Stomach (tissue), 19 donors: ENCODE measurements at regions of chr17 and their contacts with region 1.

Region 1: DNA sequence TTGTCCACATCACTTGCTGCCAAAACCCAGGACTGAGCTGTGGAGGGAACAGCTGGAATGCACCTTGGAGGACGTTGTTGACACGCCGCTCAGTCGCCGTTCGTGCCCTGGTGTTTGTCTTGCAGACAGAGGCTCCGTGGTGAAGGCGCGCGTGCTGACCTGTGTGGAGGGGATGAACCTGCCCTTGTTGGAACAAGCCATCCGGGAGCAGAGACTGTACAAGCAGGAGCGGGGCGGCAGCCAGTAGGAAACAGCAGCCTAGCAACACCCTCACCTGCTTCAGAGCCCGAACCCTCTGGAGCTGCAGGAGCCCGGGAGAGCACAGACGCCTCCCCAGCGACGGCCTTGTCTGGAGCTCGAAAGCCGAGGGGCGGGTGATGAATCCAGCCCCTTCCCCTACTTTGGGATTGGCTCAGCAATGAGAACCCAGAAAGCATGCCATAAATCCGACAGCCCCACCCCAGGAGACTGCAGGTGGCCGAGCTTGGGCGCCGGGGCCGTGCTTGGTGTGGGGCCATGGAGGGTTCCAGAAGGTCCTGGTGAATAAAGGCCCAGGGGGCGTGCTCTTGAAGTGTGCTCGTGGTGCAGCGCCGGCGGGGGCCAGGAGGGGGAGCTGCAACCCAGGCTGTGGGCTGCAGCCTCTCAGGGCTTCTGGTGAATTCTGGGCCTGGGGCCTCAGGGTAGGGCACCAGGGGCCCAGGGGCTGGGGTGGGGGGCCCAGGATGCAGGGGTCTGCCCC is 470 bp upstream of the CDK3 start:
- DNase-seq: peak; percentile 58 to 81
- H3K4me3 ChIP-seq: no peak overlapping the region
- H3K27ac ChIP-seq: peak overlapping the region in 2 of 5 donors; percentile 18 to 36
- H3K4me1 ChIP-seq: peaks cover 27 to 61% (median 45%) of the 10 kb centered on the region in 4 donors
- H3K27me3 ChIP-seq: no peaks in the 10 kb centered on the region
- CTCF ChIP-seq: peak in 4 of 7 experiments; percentile 49 to 73 (median 63)
- EP300 ChIP-seq: no peak
- POLR2A ChIP-seq: no peak

Region 2: GRCh38 chr17:75904749-75905521 is 95.2 kb before region 1 on chr17 and contains the start of gene MRPL38:
- intact Hi-C with region 1: loop called (anchors 5 kb)
- DNase-seq: peak; percentile 97 to 98
- H3K4me3 ChIP-seq: peak within 1 kb of the TSS; percentile 85 to 91 (median 89)
- H3K27ac ChIP-seq: peak within 1 kb of the TSS; percentile 87 to 95 (median 92)
- H3K4me1 ChIP-seq: peaks cover 15 to 33% (median 24%) of the 10 kb centered on the region in 4 donors
- H3K27me3 ChIP-seq: no peaks in the 10 kb centered on the region
- CTCF ChIP-seq: peak in 6 of 7 experiments; percentile 90 to 100 (median 99)
- EP300 ChIP-seq: no peak
- POLR2A ChIP-seq: peak in 1 of 4 donors; percentile 12
- total RNA-seq, gene MRPL38: 9.3 to 244 (median 29.9) TPM